ENCODE measurements at regions of chr20 and their contacts with region 1.

Region 1: DNA sequence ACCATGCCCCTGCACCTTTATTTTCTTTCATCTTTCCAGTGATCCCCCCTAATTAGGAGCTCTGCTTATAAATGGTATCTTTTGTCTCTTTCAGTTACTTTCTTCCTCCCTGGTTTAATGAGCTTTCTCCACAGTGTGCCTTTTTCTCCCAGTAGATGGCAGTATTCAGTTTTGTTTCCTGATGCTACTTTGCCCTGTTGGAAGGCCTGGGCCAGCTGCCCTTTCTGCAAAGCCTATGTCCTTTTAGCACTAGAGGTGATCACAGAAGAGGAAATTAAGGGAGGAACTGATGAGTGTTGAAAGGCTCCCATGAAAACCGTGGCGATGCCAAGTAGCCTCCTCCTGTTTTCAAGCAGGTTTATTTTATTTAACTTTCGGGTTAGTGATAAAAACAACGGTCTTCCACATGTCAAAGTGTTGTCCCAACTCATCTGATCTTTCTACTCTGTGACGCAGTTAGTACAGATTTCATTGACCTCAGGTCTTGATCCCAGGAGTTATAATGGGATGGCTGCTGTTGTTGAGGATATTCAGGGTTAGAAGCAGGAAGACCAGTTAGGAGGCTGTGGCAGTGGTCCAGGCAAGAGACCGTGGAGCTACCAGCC is 184.2 kb upstream of the BMP2 start:
- DNase-seq: peak; percentile 58 to 70
- H3K4me3 ChIP-seq: no peak overlapping the region
- H3K4me3 Mint-ChIP-seq: no peak overlapping the region
- H3K27ac Mint-ChIP-seq: no peak overlapping the region
- H3K4me1 ChIP-seq: no peaks in the 10 kb centered on the region
- H3K4me1 Mint-ChIP-seq: peaks cover 7% of the 10 kb centered on the region
- H3K27me3 ChIP-seq: no peaks in the 10 kb centered on the region
- H3K27me3 Mint-ChIP-seq: no peaks in the 10 kb centered on the region
- CTCF ChIP-seq: peak; percentile 70 to 72

Region 2: DNA sequence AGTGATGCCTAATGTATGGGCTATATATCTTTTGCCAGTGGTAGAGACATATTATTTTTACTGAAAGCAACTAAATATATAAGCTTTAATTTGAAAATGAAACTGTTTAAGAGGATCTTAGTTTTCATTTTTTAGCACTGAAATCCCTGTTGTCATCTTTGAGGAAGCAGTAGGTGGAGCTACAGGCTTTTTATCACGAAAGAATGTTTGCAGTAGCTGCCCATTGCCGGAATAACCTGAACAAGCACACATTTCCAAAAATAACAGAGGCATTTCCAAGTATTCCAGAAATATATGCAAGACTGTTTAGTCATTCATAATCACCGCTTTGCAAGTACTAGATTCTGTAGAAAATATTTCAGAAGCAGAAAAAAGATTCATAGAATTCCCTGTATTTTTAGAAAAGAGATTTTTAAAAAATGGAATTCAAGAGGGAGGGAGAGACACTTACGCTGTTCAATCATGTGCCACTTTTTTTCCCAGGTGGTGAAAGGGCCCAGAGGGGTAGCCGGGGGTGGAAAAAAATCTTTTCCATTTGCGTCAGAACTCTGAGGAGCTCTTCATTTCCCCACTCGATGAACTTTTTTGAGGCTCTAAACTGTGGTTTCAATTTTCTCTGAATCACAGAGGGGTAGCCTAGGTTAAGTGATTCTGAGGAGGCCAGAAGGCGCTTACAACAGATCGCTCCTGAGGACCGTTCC is 317.9 kb before region 1 on chr20:
- CTCF ChIA-PET with region 1: interaction called, 11 read pairs
- POLR2A ChIA-PET with region 1: no interaction called
- intact Hi-C with region 1: loop called (anchors 1 kb)
- DNase-seq: peak in 1 of 2 experiments; percentile 22
- H3K4me3 ChIP-seq: no peak overlapping the region
- H3K4me3 Mint-ChIP-seq: no peak overlapping the region
- H3K27ac Mint-ChIP-seq: no peak overlapping the region
- H3K4me1 ChIP-seq: no peaks in the 10 kb centered on the region
- H3K4me1 Mint-ChIP-seq: no peaks in the 10 kb centered on the region
- H3K27me3 ChIP-seq: no peaks in the 10 kb centered on the region; the same call in 1 of the 2 replicates
- H3K27me3 Mint-ChIP-seq: peaks cover 10% of the 10 kb centered on the region
- CTCF ChIP-seq: peak; percentile 48 to 62

Region 3: GRCh38 chr20:6629564-6629963 is 46.3 kb after region 1 on chr20:
- CTCF ChIA-PET with region 1: interaction called, 7 read pairs
- POLR2A ChIA-PET with region 1: no interaction called
- intact Hi-C with region 1: loop called (anchors 1 kb)
- DNase-seq: no peak
- H3K4me3 ChIP-seq: no peak overlapping the region
- H3K4me3 Mint-ChIP-seq: no peak overlapping the region
- H3K27ac Mint-ChIP-seq: no peak overlapping the region
- H3K4me1 ChIP-seq: peaks cover 3% of the 10 kb centered on the region
- H3K4me1 Mint-ChIP-seq: no peaks in the 10 kb centered on the region
- H3K27me3 ChIP-seq: no peaks in the 10 kb centered on the region
- H3K27me3 Mint-ChIP-seq: no peaks in the 10 kb centered on the region
- CTCF ChIP-seq: peak in 1 of 2 experiments; percentile 22

Region 4: DNA sequence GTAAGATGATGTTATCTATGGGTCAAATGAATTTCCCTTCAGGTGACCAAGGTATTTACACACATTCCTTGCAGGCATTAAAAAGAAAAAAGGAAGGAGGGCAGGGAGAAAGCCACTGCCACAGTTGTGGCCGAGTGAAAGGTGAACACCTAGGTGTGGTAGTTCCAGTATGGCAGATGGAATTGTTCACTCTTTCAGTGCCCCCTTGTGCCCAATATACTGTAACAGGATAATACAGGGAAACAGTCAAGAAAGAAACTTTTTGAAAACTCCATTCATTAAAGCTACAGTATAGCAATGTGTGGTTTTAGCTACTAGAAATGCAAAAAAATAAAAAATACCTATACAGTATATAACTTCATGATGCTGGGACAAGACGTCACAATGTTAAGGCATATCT is 236.4 kb after region 1 on chr20:
- CTCF ChIA-PET with region 1: interaction called, 10 read pairs
- POLR2A ChIA-PET with region 1: no interaction called
- intact Hi-C with region 1: loop called (anchors 1 kb)
- DNase-seq: peak; percentile 49 to 52
- H3K4me3 ChIP-seq: no peak overlapping the region
- H3K4me3 Mint-ChIP-seq: no peak overlapping the region
- H3K27ac Mint-ChIP-seq: no peak overlapping the region
- H3K4me1 ChIP-seq: no peaks in the 10 kb centered on the region
- H3K4me1 Mint-ChIP-seq: no peaks in the 10 kb centered on the region
- H3K27me3 ChIP-seq: no peaks in the 10 kb centered on the region
- H3K27me3 Mint-ChIP-seq: no peaks in the 10 kb centered on the region
- CTCF ChIP-seq: peak; percentile 46

Measured in Caco-2 (cell line).